ENCODE measurements at regions of chr5 and their contacts with region 1.

Region 1: DNA sequence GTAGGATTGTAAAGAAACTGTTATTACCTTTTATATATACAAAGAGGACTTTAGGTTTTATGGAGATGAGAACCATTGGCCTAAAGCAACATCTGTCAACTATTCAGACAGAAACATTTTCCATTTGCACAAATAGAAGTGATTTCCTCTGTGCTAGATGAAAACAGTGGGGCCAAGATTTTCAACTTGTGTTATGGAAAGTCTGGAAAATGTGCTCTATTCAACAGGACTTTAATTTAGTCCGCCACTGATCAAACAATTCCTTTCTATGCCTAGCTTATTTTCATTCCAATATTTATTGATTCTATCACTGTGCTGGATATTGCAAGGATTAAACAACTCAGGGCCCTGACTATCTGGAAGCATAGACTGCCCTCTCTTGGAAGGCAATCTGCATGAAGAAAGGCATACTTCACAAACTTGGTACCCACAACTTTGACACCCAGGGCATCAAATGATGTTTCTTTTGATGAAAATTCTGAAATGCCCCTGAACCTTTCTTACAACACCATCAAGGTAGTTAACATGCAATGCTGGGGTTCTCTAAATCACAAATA is 126.6 kb upstream of the HMHB1 start:
- DNase-seq: no peak
- ATAC-seq: no peak
- H3K4me3 ChIP-seq: no peak overlapping the region
- H3K27ac ChIP-seq: no peak overlapping the region
- H3K4me1 ChIP-seq: no peaks in the 10 kb centered on the region
- H3K27me3 ChIP-seq: no peaks in the 10 kb centered on the region
- CTCF ChIP-seq: peak; percentile 20 to 40 (median 32); a peak in 4 of 6 replicates
- POLR2A ChIP-seq: no peak
- RAD21 ChIP-seq: peak; percentile 74

Region 2: DNA sequence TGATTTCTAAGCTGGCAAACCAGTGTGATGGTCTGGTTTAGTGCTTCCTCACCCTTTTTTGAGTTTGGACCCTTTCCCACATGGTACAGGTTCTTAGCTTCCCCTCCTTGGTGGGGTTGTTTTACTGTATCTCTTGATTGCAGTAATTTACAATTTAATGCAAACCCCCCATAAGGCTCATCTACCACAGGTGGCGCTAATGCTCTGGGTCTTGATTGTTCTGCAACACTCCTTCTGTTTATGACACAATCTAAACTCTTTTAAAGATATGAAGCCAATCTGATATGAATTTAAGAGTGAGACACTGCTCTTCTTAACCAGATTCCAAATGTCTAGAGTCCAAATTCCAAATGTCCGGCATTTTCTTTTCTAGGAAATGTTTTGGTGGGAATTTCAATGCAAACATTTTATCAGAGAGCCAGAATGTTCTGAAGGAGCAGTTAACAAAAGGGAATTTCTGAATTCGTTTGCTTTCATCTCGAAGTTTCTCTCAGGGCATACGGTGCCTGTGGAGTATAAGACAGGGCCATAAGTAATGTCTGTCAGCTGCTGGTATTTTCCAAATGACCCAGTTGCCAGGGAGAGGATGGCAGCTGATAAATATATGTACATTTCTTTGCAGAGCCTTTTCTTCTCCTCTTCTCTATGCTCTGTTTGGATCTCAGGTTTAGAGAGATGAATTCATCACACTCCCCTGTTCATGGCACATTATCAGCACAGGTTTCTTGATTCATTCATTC is 668.4 kb before region 1 on chr5:
- CTCF ChIA-PET with region 1: no interaction called
- POLR2A ChIA-PET with region 1: no interaction called
- RAD21 ChIA-PET with region 1: no interaction called
- intact Hi-C with region 1: loop called (anchors 10 kb)
- DNase-seq: no peak
- ATAC-seq: peak; percentile 73
- H3K4me3 ChIP-seq: no peak overlapping the region
- H3K27ac ChIP-seq: no peak overlapping the region
- H3K4me1 ChIP-seq: no peaks in the 10 kb centered on the region
- H3K27me3 ChIP-seq: no peaks in the 10 kb centered on the region
- CTCF ChIP-seq: peak; percentile 51 to 80 (median 66); a peak in 5 of 6 replicates
- POLR2A ChIP-seq: no peak
- RAD21 ChIP-seq: peak; percentile 86

Region 3: DNA sequence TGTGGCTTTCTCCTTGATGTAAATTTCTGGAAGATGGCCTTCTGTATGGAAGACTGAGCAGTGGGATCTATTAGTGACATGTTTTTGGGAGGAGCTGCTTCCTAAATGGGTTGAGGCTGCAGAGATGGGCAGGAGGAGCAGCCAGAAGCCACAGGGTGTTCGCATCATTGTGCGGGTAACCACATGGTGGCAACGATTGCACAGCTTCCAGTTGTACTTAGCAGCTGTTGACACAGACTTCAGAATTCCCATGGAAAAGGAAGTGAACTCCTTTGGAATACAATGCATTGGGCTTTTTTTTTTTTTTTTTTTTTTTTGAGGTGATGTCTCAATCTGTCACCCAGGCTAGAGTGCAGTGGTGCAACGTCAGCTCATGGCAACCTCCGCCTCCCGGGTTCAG is 579.1 kb before region 1 on chr5:
- CTCF ChIA-PET with region 1: no interaction called
- POLR2A ChIA-PET with region 1: no interaction called
- RAD21 ChIA-PET with region 1: no interaction called
- intact Hi-C with region 1: loop called (anchors 10 kb)
- DNase-seq: no peak
- ATAC-seq: peak; percentile 77
- H3K4me3 ChIP-seq: no peak overlapping the region
- H3K27ac ChIP-seq: no peak overlapping the region
- H3K4me1 ChIP-seq: peaks cover 7 to 14% of the 10 kb centered on the region in 2 experiments; a peak in 2 of 4 replicates
- H3K27me3 ChIP-seq: no peaks in the 10 kb centered on the region
- CTCF ChIP-seq: peak; percentile 31 to 49 (median 36); a peak in 2 of 6 replicates
- POLR2A ChIP-seq: no peak
- RAD21 ChIP-seq: peak; percentile 81

Region 4: GRCh38 chr5:143195491-143195890 is 489.8 kb before region 1 on chr5:
- CTCF ChIA-PET with region 1: no interaction called
- POLR2A ChIA-PET with region 1: no interaction called
- RAD21 ChIA-PET with region 1: no interaction called
- intact Hi-C with region 1: loop called (anchors 5 kb)
- DNase-seq: no peak
- ATAC-seq: no peak
- H3K4me3 ChIP-seq: no peak overlapping the region
- H3K27ac ChIP-seq: no peak overlapping the region
- H3K4me1 ChIP-seq: peaks cover 0 to 2% of the 10 kb centered on the region in 2 experiments; a peak in 1 of 4 replicates
- H3K27me3 ChIP-seq: no peaks in the 10 kb centered on the region
- CTCF ChIP-seq: no peak
- POLR2A ChIP-seq: no peak
- RAD21 ChIP-seq: no peak

Region 5: DNA sequence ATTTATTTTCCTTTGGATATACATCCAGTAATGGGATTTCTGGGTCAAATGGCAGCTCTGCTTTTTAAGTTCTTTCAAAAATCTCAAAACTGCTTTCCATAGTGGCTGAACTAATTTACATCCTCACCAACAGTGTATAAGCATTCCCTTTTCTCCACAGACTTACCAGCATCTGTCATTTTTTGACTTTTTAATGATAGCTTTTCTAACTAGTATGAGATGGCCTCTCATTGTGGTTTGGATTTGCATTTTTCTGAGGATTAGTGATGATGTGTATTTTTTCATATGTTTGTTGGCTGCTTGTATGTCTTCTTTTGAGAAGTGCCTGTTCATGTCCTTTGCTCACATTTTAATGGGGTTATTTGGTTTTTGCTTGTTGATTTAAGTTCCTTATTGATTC is 36.6 kb after region 1 on chr5:
- CTCF ChIA-PET with region 1: no interaction called
- POLR2A ChIA-PET with region 1: no interaction called
- RAD21 ChIA-PET with region 1: no interaction called
- intact Hi-C with region 1: no loop called
- DNase-seq: no peak
- ATAC-seq: no peak
- H3K4me3 ChIP-seq: no peak overlapping the region
- H3K27ac ChIP-seq: no peak overlapping the region
- H3K4me1 ChIP-seq: no peaks in the 10 kb centered on the region
- H3K27me3 ChIP-seq: no peaks in the 10 kb centered on the region
- CTCF ChIP-seq: no peak
- POLR2A ChIP-seq: no peak
- RAD21 ChIP-seq: no peak

Region 6: DNA sequence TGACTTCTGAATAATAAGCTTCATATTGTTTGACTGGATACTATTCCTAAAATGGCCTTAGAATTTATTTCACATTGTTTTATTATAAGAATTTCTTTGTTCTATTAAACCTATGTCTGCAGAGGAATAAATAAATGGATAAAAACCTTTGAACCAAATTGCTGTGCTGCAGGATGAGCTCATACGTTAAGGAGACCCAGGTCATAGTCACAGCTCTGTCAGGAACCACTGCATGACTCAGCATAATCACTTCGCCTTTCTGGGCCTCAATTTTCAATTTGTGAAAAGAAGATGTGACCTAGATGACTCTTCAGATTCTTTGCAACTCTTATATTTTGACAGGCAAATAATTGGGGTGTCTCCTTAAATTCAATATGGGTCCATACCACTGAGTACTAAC is 89.9 kb after region 1 on chr5:
- CTCF ChIA-PET with region 1: no interaction called
- POLR2A ChIA-PET with region 1: no interaction called
- RAD21 ChIA-PET with region 1: no interaction called
- intact Hi-C with region 1: no loop called
- DNase-seq: no peak
- ATAC-seq: no peak
- H3K4me3 ChIP-seq: no peak overlapping the region
- H3K27ac ChIP-seq: no peak overlapping the region
- H3K4me1 ChIP-seq: peaks cover 0 to 2% of the 10 kb centered on the region in 2 experiments; a peak in 1 of 4 replicates
- H3K27me3 ChIP-seq: no peaks in the 10 kb centered on the region
- CTCF ChIP-seq: no peak
- POLR2A ChIP-seq: no peak
- RAD21 ChIP-seq: no peak

Region 7: DNA sequence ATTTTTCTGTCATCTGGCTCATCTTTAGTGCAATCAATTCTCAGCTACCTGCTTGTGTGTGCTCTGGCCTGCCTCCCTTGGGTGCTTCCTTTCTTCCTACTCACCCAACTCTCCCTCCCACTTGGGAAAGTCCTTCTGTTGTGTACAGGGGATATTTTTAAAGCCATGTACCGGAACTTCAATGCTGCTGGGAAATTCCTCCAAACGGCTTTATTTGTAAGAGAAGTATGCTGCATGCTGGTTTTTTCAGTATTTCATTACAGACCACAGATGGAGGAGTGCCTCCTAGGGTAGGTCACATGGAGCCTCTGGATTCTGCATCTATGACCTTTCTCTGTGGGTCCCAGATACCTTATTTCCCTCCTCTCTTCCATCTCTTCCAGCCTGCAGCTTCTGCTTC is 121.3 kb after region 1 on chr5:
- CTCF ChIA-PET with region 1: no interaction called
- POLR2A ChIA-PET with region 1: no interaction called
- RAD21 ChIA-PET with region 1: no interaction called
- intact Hi-C with region 1: no loop called
- DNase-seq: no peak
- ATAC-seq: no peak
- H3K4me3 ChIP-seq: no peak overlapping the region
- H3K27ac ChIP-seq: no peak overlapping the region
- H3K4me1 ChIP-seq: no peaks in the 10 kb centered on the region
- H3K27me3 ChIP-seq: no peaks in the 10 kb centered on the region
- CTCF ChIP-seq: no peak
- POLR2A ChIP-seq: no peak
- RAD21 ChIP-seq: no peak

Region 8: DNA sequence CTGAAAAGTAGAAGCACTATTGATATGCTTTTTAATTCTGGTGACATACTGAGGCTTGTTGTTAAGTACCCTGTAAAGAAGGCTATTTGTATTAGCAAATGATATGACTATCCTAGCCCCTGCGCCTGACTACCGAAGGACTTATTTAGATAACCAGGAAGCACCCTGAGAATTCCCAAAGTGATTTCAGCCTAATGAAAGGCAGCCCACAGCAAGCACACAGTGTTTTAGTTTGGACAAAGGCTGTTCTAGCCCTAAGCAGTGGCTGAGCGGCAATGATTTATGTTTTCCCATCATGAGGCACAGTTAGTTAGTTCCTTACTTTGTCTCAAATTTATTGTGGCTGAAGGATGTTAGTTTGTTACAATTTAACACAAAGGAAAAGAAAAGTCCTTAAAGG is 720.7 kb after region 1 on chr5:
- CTCF ChIA-PET with region 1: no interaction called
- POLR2A ChIA-PET with region 1: no interaction called
- RAD21 ChIA-PET with region 1: no interaction called
- intact Hi-C with region 1: no loop called
- DNase-seq: no peak
- ATAC-seq: no peak
- H3K4me3 ChIP-seq: no peak overlapping the region
- H3K27ac ChIP-seq: no peak overlapping the region
- H3K4me1 ChIP-seq: no peaks in the 10 kb centered on the region
- H3K27me3 ChIP-seq: peaks cover 16% of the 10 kb centered on the region; the same call in 1 of the 2 replicates
- CTCF ChIP-seq: no peak
- POLR2A ChIP-seq: no peak
- RAD21 ChIP-seq: no peak